BJ (cell line): ENCODE measurements at regions of chr12 and their contacts with region 1.

Region 1: DNA sequence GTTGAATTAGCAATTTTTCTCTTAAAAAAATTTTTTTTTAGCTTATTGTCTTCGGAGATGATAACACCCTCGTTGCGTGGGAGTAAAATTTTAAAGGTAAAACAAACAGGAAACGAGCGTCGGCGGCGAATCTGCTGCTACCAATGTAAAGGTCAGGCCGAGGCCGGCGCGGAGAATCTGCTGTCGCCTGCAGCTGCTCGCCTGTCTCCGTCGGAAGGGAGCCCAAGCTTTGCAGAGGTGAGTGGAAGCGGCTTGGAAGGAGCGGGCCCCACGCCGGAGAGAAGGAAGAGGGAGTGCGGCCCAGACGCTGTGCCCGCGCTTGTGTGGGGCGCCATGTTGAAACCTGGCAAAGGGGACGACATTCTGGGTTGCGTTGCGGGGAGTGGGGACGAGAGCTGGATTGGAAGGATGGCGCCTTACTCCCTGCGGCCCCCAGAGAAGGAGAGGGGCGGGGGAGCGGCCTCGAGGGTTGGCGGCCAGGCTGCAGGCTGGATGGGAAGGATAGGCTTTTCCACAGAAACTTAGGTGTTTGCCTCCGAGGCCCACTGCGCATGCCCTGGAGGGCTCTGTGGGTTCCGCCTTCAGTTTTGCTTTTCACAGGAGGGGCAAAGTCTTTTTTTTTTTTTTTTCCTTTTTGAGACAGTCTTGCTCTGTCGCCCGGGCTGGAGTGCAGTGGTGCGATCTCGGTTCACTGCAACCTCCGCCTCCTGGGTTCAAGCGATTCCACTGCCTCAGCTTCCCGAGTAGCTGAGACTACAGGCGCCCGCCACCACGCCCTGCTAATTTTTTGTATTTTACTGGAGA is at the start of gene SNRNP35:
- DNase-seq: no peak
- H3K4me3 ChIP-seq: peak within 1 kb of the TSS; percentile 88
- H3K27me3 ChIP-seq: no peaks in the 10 kb centered on the region
- CTCF ChIP-seq: no peak
- polyA plus RNA-seq, gene SNRNP35: 7.5 and 8.1 TPM in 2 replicates

Region 2: GRCh38 chr12:123237646-123238329 is 220.4 kb before region 1 on chr12:
- CTCF ChIA-PET with region 1: no interaction called
- POLR2A ChIA-PET with region 1: no interaction called
- DNase-seq: no peak
- H3K4me3 ChIP-seq: no peak overlapping the region
- H3K27me3 ChIP-seq: no peaks in the 10 kb centered on the region
- CTCF ChIP-seq: peak; percentile 75

Region 3: DNA sequence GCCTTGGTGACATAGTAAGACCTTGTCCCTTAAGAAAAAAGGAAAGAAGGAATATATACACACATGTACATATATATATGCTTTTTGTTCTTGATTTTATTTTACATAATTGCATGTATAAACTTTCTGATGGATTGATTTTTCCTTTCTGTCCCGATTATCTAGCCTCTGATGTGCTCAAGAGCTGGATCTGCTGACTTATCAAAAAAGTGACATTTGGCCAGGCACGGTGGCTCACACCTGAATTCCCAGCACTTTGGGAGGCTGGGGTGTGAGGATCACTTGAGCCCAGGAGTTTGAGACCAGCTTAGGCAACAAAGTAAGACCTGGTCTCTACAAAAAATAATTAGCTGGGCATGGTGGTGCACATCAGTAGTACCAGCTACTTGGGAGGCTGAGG is 11.8 kb after region 1 on chr12:
- CTCF ChIA-PET with region 1: interaction called, 5 read pairs
- POLR2A ChIA-PET with region 1: interaction called, 19 read pairs
- DNase-seq: no peak
- H3K4me3 ChIP-seq: no peak overlapping the region
- H3K27me3 ChIP-seq: no peaks in the 10 kb centered on the region
- CTCF ChIP-seq: no peak

Region 4: GRCh38 chr12:123524378-123524777 is 66.2 kb after region 1 on chr12:
- CTCF ChIA-PET with region 1: no interaction called
- POLR2A ChIA-PET with region 1: interaction called, 11 read pairs
- DNase-seq: no peak
- H3K4me3 ChIP-seq: no peak overlapping the region
- H3K27me3 ChIP-seq: no peaks in the 10 kb centered on the region
- CTCF ChIP-seq: no peak